CD4-positive, alpha-beta memory T cell (primary cell): ENCODE measurements at regions of chr11 and their contacts with region 1.

Region 1: GRCh38 chr11:35040221-35040942 is 98.6 kb upstream of the CD44 start:
- DNase-seq: peak; percentile 78 to 93 (median 84)
- H3K4me3 ChIP-seq: peak overlapping the region; percentile 31 to 62
- H3K4me3 Mint-ChIP-seq: peak overlapping the region; percentile 80 to 93 (median 88)
- H3K27ac ChIP-seq: peak overlapping the region; percentile 94
- H3K27ac Mint-ChIP-seq: peak overlapping the region; percentile 96 to 99 (median 98)
- H3K4me1 ChIP-seq: peaks cover 68% of the 10 kb centered on the region
- H3K4me1 Mint-ChIP-seq: peaks cover 38 to 69% (median 54%) of the 10 kb centered on the region in 4 donors
- H3K27me3 ChIP-seq: no peaks in the 10 kb centered on the region
- H3K27me3 Mint-ChIP-seq: no peaks in the 10 kb centered on the region

Region 2: GRCh38 chr11:35006389-35007128 is 33.8 kb before region 1 on chr11:
- CTCF ChIA-PET with region 1: interaction called, 4 read pairs
- POLR2A ChIA-PET with region 1: interaction called, 26 read pairs
- intact Hi-C with region 1: no loop called
- DNase-seq: peak in 3 of 5 donors; percentile 11 to 48 (median 16)
- H3K4me3 ChIP-seq: peak overlapping the region in 1 of 2 donors; percentile 10
- H3K4me3 Mint-ChIP-seq: peak overlapping the region in 7 of 8 donors; percentile 7 to 79 (median 47)
- H3K27ac ChIP-seq: no peak overlapping the region
- H3K27ac Mint-ChIP-seq: peak overlapping the region; percentile 72 to 88 (median 81)
- H3K4me1 ChIP-seq: peaks cover 32% of the 10 kb centered on the region
- H3K4me1 Mint-ChIP-seq: peaks cover 23 to 62% (median 45%) of the 10 kb centered on the region in 4 donors
- H3K27me3 ChIP-seq: no peaks in the 10 kb centered on the region
- H3K27me3 Mint-ChIP-seq: no peaks in the 10 kb centered on the region

Region 3: GRCh38 chr11:35021589-35021988 is 18.8 kb before region 1 on chr11:
- CTCF ChIA-PET with region 1: interaction called, 3 read pairs
- POLR2A ChIA-PET with region 1: interaction called, 10 read pairs
- intact Hi-C with region 1: no loop called
- DNase-seq: no peak
- H3K4me3 ChIP-seq: no peak overlapping the region
- H3K4me3 Mint-ChIP-seq: no peak overlapping the region
- H3K27ac ChIP-seq: no peak overlapping the region
- H3K27ac Mint-ChIP-seq: no peak overlapping the region
- H3K4me1 ChIP-seq: no peaks in the 10 kb centered on the region
- H3K4me1 Mint-ChIP-seq: peaks cover 0 to 5% (median 0%) of the 10 kb centered on the region in 4 donors
- H3K27me3 ChIP-seq: no peaks in the 10 kb centered on the region
- H3K27me3 Mint-ChIP-seq: no peaks in the 10 kb centered on the region

Region 4: GRCh38 chr11:35066783-35067423 is 26.5 kb after region 1 on chr11:
- CTCF ChIA-PET with region 1: interaction called, 4 read pairs
- POLR2A ChIA-PET with region 1: interaction called, 76 read pairs
- intact Hi-C with region 1: loop called (anchors 1 kb)
- DNase-seq: peak; percentile 34 to 53 (median 42)
- H3K4me3 ChIP-seq: no peak overlapping the region
- H3K4me3 Mint-ChIP-seq: peak overlapping the region; percentile 15 to 78 (median 67)
- H3K27ac ChIP-seq: peak overlapping the region; percentile 4
- H3K27ac Mint-ChIP-seq: peak overlapping the region; percentile 63 to 92 (median 89)
- H3K4me1 ChIP-seq: peaks cover 43% of the 10 kb centered on the region
- H3K4me1 Mint-ChIP-seq: peaks cover 4 to 32% (median 27%) of the 10 kb centered on the region in 4 donors
- H3K27me3 ChIP-seq: no peaks in the 10 kb centered on the region
- H3K27me3 Mint-ChIP-seq: no peaks in the 10 kb centered on the region

Region 5: GRCh38 chr11:35126000-35126878 is 85.9 kb after region 1 on chr11:
- CTCF ChIA-PET with region 1: interaction called, 4 read pairs
- POLR2A ChIA-PET with region 1: interaction called, 10 read pairs
- intact Hi-C with region 1: no loop called
- DNase-seq: peak in 3 of 5 donors; percentile 41 to 70 (median 53)
- H3K4me3 ChIP-seq: peak overlapping the region; percentile 23 to 42
- H3K4me3 Mint-ChIP-seq: peak overlapping the region; percentile 54 to 80 (median 74)
- H3K27ac ChIP-seq: peak overlapping the region; percentile 40
- H3K27ac Mint-ChIP-seq: peak overlapping the region; percentile 80 to 92 (median 89)
- H3K4me1 ChIP-seq: peaks cover 55% of the 10 kb centered on the region
- H3K4me1 Mint-ChIP-seq: peaks cover 47 to 65% (median 60%) of the 10 kb centered on the region in 4 donors
- H3K27me3 ChIP-seq: no peaks in the 10 kb centered on the region
- H3K27me3 Mint-ChIP-seq: no peaks in the 10 kb centered on the region

Region 6: DNA sequence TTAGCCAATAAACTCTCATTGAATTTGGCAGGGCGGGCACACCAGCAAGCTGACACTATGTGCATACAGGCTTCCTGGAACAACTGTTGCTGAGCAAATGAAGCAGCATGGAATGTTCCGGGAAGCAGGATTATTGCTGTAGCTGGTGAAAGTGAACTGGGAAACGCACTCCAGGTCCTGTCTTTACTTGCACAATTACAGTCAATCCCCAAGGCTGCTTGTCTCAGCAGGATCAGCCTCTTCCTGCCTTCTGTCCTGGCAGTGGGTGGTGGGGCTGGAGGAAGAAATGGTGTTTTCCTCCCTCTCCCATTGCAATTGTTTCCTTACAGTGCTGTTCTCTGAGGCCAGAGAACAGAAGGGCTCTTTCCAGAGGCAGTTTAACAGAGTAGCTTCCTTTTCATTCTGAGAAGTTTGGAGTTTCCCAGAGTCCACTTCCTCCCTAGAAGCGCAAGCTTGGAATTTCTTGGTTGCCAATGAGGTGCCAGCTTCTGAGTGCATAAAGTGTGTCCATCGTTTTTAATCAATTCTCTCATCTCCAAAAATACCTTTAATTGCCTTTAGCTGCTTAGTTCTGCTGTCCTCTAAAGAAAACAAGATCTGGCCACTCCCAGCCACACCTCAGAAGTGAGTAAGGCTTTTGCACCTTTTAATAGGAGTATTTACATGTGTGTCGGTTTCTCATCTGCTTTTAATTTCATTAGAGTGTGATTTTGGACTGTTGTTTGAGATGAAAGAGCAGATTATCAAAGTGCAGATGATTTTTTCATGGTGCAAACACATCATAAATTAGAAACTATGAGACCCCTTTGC is 118.5 kb after region 1 on chr11:
- CTCF ChIA-PET with region 1: interaction called, 10 read pairs
- POLR2A ChIA-PET with region 1: interaction called, 87 read pairs
- intact Hi-C with region 1: no loop called
- DNase-seq: peak in 1 of 5 donors; percentile 22
- H3K4me3 ChIP-seq: peak overlapping the region in 1 of 2 donors; percentile 8
- H3K4me3 Mint-ChIP-seq: peak overlapping the region; percentile 51 to 87 (median 70)
- H3K27ac ChIP-seq: peak overlapping the region; percentile 96
- H3K27ac Mint-ChIP-seq: peak overlapping the region; percentile 89 to 100 (median 100)
- H3K4me1 ChIP-seq: peaks cover 100% of the 10 kb centered on the region
- H3K4me1 Mint-ChIP-seq: peaks cover 93 to 100% (median 97%) of the 10 kb centered on the region in 4 donors
- H3K27me3 ChIP-seq: no peaks in the 10 kb centered on the region
- H3K27me3 Mint-ChIP-seq: no peaks in the 10 kb centered on the region